Right cardiac atrium (tissue), 5 donors: ENCODE measurements at regions of chr17 and their contacts with region 1.

Region 1: GRCh38 chr17:27463235-27463677 is 7.0 kb downstream of the KSR1 start:
- DNase-seq: no peak
- ATAC-seq: no peak
- H3K4me3 ChIP-seq: no peak overlapping the region
- H3K27ac ChIP-seq: no peak overlapping the region
- H3K4me1 ChIP-seq: peaks cover 10% of the 10 kb centered on the region
- H3K27me3 ChIP-seq: no peaks in the 10 kb centered on the region

Region 2: GRCh38 chr17:27578718-27579085 is 115.4 kb after region 1 on chr17:
- intact Hi-C with region 1: loop called in 1 of 4 experiments (anchors 5 kb)
- DNase-seq: peak in 1 of 3 donors; percentile 33
- ATAC-seq: no peak
- H3K4me3 ChIP-seq: no peak overlapping the region
- H3K27ac ChIP-seq: no peak overlapping the region
- H3K4me1 ChIP-seq: peaks cover 19% of the 10 kb centered on the region
- H3K27me3 ChIP-seq: no peaks in the 10 kb centered on the region